ENCODE measurements at regions of chr3 and their contacts with region 1.

Region 1: GRCh38 chr3:69865920-69866679 is 126.8 kb downstream of the MITF start:
- DNase-seq: peak; percentile 39 to 75
- ATAC-seq: peak; percentile 93 to 99 (median 97)
- H3K4me3 ChIP-seq: peak overlapping the region in 9 of 10 donors; percentile 12 to 49 (median 43)
- H3K27ac ChIP-seq: peak overlapping the region; percentile 37 to 86 (median 76)
- H3K4me1 ChIP-seq: peaks cover 0 to 32% (median 21%) of the 10 kb centered on the region in 9 donors
- H3K27me3 ChIP-seq: no peaks in the 10 kb centered on the region
- CTCF ChIP-seq: no peak

Region 2: DNA sequence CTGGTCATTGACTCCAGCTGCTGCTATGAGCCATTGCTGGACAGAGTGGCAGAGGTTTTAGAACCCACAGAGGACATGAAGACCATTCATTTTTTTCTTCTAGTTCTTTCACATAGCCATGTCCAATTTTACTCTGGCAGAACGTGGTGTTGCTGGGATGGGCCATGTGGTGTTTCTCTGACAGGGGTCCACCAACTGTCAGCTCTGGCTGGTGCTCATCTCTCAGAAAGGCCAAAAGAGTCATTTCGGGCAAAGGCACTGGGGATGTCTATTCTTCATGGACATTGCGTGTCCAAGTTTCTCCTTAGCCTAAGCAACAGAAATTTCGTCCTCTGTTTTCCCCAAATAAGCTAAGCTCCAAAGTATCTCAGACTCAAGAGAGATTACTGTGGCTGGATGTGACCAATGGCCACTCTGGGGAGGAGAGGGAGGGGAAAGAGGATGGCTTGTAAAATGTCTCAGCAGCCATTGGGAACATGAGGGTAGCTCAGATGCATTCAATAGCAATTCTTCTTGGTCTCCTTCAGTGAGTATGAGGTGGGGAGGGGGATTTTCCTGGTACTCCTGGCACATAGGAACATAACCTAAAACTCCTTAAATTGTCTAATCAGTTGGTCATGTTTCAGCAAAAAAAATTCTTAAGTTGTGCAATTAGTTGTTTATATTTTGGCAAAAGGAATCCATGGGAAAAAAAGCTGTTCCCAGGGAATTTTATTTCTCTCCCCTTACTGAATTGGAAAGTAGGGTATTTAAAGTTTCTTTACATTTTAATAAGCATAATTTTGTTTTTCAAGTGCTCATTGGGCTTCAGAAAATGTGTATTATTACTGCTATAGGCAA is 258.4 kb before region 1 on chr3:
- intact Hi-C with region 1: no loop called
- DNase-seq: no peak
- ATAC-seq: peak in 2 of 8 donors; percentile 16 to 31
- H3K4me3 ChIP-seq: no peak overlapping the region
- H3K27ac ChIP-seq: no peak overlapping the region
- H3K4me1 ChIP-seq: no peaks in the 10 kb centered on the region
- H3K27me3 ChIP-seq: no peaks in the 10 kb centered on the region
- CTCF ChIP-seq: no peak

Region 3: GRCh38 chr3:69747511-69748258 is 118.4 kb before region 1 on chr3:
- intact Hi-C with region 1: no loop called
- DNase-seq: no peak
- ATAC-seq: no peak
- H3K4me3 ChIP-seq: no peak overlapping the region
- H3K27ac ChIP-seq: peak overlapping the region in 5 of 10 donors; percentile 5 to 77 (median 36)
- H3K4me1 ChIP-seq: peaks cover 11 to 95% (median 78%) of the 10 kb centered on the region in 9 donors
- H3K27me3 ChIP-seq: no peaks in the 10 kb centered on the region
- CTCF ChIP-seq: no peak

Region 4: DNA sequence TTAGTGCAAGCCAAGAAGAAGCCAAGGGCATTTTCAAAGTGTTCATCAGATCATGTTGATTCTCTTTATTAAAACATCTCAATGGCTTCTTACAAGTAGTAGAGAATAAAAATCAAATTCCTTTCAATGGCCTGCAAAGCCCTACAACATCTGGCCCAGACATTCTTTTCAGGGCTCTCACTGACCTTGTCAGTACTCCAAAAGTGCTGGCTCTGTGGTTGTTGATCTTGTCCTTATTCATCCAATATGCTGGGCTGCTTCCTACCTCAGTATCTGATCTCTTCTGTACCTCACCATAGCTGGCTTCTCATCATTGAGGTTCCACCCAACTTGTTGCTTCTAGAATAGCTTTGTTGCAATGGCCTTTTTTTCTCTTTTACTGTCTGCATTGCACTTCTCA is 59.4 kb after region 1 on chr3:
- intact Hi-C with region 1: loop called in 1 of 10 experiments (anchors 10 kb)
- DNase-seq: no peak
- ATAC-seq: no peak
- H3K4me3 ChIP-seq: no peak overlapping the region
- H3K27ac ChIP-seq: no peak overlapping the region
- H3K4me1 ChIP-seq: peaks cover 0 to 51% (median 29%) of the 10 kb centered on the region in 9 donors
- H3K27me3 ChIP-seq: no peaks in the 10 kb centered on the region
- CTCF ChIP-seq: no peak

Region 5: DNA sequence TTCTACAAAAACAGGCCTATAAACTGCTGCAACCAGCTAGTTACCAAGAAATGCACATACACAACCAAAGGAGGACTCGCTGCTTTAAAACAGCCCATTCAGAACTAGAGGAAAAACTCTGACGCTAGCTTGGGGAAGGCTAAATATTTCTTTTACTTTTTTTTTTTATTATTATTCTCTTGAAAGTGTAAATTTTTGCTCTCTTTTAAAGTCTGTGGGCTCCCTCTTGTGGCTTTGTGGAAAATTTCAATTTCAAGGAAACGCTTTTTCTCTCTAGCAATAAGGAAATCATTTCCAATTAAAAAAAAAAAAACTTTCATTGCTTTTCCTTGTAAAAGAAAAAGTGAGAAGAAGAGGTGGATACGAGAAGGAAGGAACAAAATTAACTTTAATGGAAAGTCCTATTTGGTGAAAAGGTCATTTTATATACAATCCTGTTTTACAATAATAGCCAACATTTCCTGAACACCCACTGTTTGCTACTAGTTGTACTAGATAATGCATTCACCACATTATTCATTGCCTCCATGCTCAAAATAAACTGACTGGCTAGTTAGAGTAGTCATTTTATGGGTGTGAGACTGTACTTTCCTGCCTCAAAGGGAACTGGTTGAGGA is 82.3 kb after region 1 on chr3:
- intact Hi-C with region 1: loop called in 2 of 10 experiments (anchors 5 to 10 kb)
- DNase-seq: no peak
- ATAC-seq: peak in 1 of 8 donors; percentile 17
- H3K4me3 ChIP-seq: no peak overlapping the region
- H3K27ac ChIP-seq: no peak overlapping the region
- H3K4me1 ChIP-seq: peaks cover 0 to 15% (median 0%) of the 10 kb centered on the region in 9 donors
- H3K27me3 ChIP-seq: no peaks in the 10 kb centered on the region
- CTCF ChIP-seq: peak; percentile 38 to 77 (median 66)

Measured in heart right ventricle (tissue), 16 donors.